Colonic mucosa (tissue), 4 donors: ENCODE measurements at regions of chr10 and their contacts with region 1.

Region 1: GRCh38 chr10:23994479-23995046 is 214.4 kb upstream of the KIAA1217 start:
- DNase-seq: peak; percentile 67
- H3K4me3 ChIP-seq: no peak overlapping the region
- H3K27ac ChIP-seq: no peak overlapping the region
- H3K4me1 ChIP-seq: no peaks in the 10 kb centered on the region
- H3K27me3 ChIP-seq: no peaks in the 10 kb centered on the region
- CTCF ChIP-seq: peak; percentile 88

Region 2: GRCh38 chr10:24041034-24041433 is 46.5 kb after region 1 on chr10:
- intact Hi-C with region 1: no loop called
- DNase-seq: no peak
- H3K4me3 ChIP-seq: no peak overlapping the region
- H3K27ac ChIP-seq: no peak overlapping the region
- H3K4me1 ChIP-seq: no peaks in the 10 kb centered on the region
- H3K27me3 ChIP-seq: no peaks in the 10 kb centered on the region
- CTCF ChIP-seq: no peak

Region 3: DNA sequence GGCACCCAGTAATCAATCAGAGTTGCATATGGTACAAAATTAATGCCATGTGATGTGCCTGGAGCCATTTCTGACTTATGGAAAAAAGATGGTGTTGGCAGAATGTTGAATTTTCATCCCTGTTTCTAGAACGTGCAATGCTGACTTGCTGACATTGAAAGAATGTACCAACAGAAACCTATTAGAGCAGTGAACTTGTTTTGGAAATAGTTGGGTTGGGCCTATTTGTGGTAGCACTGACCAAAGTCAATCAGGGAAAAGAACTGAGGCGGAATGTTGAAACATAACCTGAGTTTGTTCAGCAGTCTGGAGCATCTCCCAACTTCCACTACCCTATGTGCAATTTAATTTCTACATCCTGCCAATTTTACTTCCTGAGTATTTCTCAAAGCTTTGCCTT is 202.7 kb after region 1 on chr10:
- intact Hi-C with region 1: loop called (anchors 2 kb)
- DNase-seq: no peak
- H3K4me3 ChIP-seq: no peak overlapping the region
- H3K27ac ChIP-seq: no peak overlapping the region
- H3K4me1 ChIP-seq: no peaks in the 10 kb centered on the region
- H3K27me3 ChIP-seq: no peaks in the 10 kb centered on the region
- CTCF ChIP-seq: no peak

Region 4: GRCh38 chr10:24360282-24361127 is 365.9 kb after region 1 on chr10:
- intact Hi-C with region 1: loop called (anchors 5 kb)
- DNase-seq: peak; percentile 81
- H3K4me3 ChIP-seq: no peak overlapping the region
- H3K27ac ChIP-seq: no peak overlapping the region
- H3K4me1 ChIP-seq: no peaks in the 10 kb centered on the region
- H3K27me3 ChIP-seq: no peaks in the 10 kb centered on the region
- CTCF ChIP-seq: peak; percentile 33

Region 5: GRCh38 chr10:24503461-24504320 is 509.1 kb after region 1 on chr10:
- intact Hi-C with region 1: loop called (anchors 5 kb)
- DNase-seq: peak; percentile 74
- H3K4me3 ChIP-seq: no peak overlapping the region
- H3K27ac ChIP-seq: no peak overlapping the region
- H3K4me1 ChIP-seq: no peaks in the 10 kb centered on the region
- H3K27me3 ChIP-seq: no peaks in the 10 kb centered on the region
- CTCF ChIP-seq: peak; percentile 53

Region 6: GRCh38 chr10:24518981-24519597 is 524.5 kb after region 1 on chr10:
- intact Hi-C with region 1: loop called (anchors 2 kb)
- DNase-seq: peak; percentile 77
- H3K4me3 ChIP-seq: no peak overlapping the region
- H3K27ac ChIP-seq: no peak overlapping the region
- H3K4me1 ChIP-seq: no peaks in the 10 kb centered on the region
- H3K27me3 ChIP-seq: no peaks in the 10 kb centered on the region
- CTCF ChIP-seq: peak; percentile 56

Region 7: DNA sequence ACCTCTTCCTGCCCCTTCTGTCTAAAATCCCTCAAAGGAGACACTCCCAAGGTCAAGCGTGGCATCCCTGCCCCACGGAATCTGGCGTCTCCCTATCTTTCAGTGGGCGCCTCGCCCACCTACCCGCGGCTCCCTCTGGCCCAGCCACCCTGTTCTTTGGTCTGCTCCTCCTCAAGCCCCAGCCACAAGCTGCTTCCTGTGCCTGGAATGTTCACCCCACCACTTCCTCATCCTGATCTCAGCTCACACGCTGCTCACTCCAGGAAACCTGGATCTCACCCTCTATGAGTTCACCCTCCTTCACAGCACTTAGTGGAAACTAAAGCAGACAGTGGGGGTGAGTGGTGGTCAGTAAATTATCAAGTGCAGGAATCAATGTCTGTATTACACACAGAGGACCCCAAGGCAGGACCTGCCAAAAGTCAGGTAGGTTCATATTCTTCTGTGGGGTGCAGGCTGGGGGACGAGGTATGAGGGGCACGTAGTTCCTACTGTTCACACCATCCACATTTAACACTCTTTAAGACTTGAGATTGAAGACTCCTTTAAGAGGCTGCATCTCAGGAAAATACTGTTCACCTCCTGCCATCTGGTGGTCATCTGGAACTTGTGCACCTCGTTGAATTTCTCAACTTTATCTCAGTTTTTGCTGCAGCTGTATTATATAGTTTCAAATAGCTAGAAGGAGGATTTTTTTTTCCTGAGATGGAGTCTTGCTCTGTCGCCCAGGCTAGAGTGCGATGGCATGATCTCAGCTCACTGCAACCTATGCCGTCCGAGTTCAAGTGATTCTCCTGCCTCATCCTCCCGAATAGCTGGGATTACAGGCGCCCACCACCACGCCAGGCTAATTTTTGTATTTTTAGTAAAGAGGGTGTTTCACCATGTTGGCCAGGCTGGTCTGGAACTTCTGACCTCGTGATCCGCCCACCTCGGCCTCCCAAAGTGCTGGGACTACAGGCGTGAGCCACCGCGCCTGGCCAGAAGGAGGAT is 562.5 kb after region 1 on chr10:
- intact Hi-C with region 1: loop called (anchors 10 kb)
- DNase-seq: peak; percentile 35
- H3K4me3 ChIP-seq: no peak overlapping the region
- H3K27ac ChIP-seq: no peak overlapping the region
- H3K4me1 ChIP-seq: no peaks in the 10 kb centered on the region
- H3K27me3 ChIP-seq: no peaks in the 10 kb centered on the region
- CTCF ChIP-seq: peak; percentile 46